ENCODE measurements at regions of chr15 and their contacts with region 1.

Region 1: DNA sequence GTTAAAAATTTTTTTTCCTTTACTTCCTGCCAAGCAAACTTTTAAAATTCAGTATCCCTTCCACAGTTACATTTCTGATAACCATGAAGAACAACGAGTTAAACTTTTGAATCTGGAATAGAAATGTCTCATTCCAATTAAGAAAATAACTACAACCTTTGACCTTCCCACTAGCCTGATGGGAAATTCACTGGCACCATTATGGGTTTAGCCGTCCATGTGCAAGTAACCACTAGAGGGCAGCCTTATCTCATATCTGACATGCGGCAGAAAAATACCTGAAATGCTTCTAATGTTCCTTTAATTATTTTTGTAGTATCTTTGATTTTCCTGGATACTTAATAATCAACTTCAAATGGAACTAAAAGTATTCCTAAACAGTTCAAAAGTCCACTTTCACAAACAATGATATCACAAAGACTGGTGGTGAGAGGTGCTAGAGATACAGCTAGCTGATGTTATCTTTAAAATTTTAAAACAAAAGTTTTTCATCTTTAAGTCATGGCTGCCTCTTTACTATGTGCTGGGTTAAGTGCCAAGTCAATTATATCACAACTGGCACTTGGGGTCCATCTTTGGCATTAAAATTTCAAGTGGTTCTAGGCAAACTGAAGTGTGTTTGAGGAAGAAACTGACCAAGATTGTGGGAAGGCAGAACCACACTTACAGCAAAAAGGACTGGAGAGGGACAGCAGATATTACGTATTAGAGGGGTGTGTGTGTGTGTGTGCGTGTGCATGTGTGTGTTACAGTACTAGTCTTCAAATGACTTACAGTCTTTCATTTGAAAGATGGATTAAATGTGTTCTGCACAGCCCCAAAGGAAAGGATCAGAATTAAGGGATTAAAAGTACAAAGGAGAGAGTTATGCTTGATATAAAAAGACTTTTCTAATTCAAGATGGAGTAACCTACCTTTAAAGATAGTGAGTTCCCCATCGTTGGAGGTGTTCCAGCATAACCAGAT is 107.1 kb upstream of the ICE2 start:
- DNase-seq: peak; percentile 52 to 72
- H3K4me3 ChIP-seq: no peak overlapping the region
- H3K27ac ChIP-seq: peak overlapping the region in 1 of 2 donors; percentile 47
- H3K4me1 ChIP-seq: no peaks in the 10 kb centered on the region
- H3K27me3 ChIP-seq: no peaks in the 10 kb centered on the region
- CTCF ChIP-seq: peak; percentile 85 to 92 (median 88)
- POLR2A ChIP-seq: no peak

Region 2: DNA sequence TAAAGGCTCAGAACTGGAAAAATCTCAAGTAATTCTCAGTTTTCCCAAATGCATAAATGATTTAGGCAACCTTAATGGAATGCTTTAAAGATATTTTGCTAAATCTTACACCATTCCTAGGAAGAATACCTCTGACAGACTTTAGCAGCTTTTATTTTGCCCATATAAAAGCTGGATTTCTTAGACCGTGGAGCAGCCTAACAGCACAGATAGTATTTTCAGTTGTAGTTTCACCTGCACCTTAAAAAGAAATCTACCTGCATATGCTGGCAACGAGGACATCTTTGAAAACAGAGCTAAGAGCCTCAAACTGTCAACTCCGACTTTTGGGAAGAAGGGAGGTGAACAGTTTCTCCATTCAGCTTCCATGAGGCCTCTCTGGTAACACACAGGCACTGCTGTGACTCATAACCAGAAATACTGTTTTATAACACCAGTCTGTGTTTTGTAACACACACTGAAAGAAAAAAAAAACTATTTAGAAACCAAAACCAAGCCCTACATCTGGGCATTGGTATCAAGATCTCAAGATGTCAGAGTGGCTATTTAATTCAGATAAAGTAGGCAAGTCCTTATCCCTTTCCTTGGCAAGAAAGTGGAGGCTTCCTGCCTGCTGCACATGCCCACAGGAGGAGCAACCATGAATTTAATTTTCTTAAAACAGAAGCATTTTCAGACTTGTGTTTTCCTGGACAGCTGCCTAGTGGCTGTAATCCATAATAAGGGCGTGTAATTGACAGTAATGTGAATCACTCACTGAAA is 74.4 kb after region 1 on chr15:
- intact Hi-C with region 1: no loop called
- DNase-seq: peak; percentile 40 to 55
- H3K4me3 ChIP-seq: no peak overlapping the region
- H3K27ac ChIP-seq: peak overlapping the region; percentile 75 to 78
- H3K4me1 ChIP-seq: no peaks in the 10 kb centered on the region
- H3K27me3 ChIP-seq: no peaks in the 10 kb centered on the region
- CTCF ChIP-seq: peak in 1 of 4 experiments; percentile 34
- POLR2A ChIP-seq: no peak

Region 3: DNA sequence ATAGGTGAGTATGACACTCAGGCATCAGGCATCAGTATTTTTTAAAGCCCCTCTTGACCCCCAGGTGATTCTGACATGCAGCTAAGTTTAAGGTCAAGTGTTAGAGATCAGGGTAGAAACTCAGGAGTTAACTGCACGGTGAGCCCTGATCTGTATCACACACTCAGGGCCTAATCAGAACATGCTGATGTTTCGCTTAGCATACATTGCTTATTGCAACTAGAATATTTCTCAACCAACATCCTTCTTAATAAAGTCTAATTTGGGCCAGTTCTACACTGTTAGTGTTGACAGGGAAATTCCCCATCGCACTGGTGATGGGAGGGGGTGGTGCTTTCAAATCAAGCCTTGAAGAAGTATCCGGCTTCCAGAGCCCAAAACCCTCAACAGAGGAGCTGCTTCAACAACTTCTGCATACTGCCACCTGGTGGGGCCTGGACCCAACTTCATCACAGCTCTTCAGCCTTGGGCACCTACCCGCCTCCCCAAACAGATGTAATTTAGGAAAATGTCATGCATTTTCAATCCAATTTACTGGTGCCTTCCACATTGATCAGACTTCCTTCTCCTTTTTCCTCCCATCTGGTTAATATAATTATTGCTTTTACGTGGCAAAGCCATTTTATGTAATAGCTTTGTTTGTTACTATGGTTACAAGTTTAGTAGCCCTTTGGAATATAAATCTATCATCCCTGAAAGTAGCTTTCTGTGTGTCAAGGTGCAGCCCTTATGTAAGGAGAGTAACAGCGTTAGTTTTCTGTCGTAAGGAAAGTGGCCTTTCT is 330.8 kb after region 1 on chr15:
- intact Hi-C with region 1: loop called (anchors 5 kb)
- DNase-seq: peak; percentile 87 to 90
- H3K4me3 ChIP-seq: peak overlapping the region in 1 of 2 donors; percentile 22
- H3K27ac ChIP-seq: peak overlapping the region; percentile 77 to 79
- H3K4me1 ChIP-seq: no peaks in the 10 kb centered on the region
- H3K27me3 ChIP-seq: no peaks in the 10 kb centered on the region
- CTCF ChIP-seq: peak; percentile 73 to 87 (median 79)
- POLR2A ChIP-seq: no peak

Measured in uterus (tissue), 4 donors.